ENCODE measurements at regions of chr2 and their contacts with region 1.

Region 1: GRCh38 chr2:119174216-119175037 is 15.9 kb upstream of the C1QL2 start:
- DNase-seq: peak in 2 of 10 donors; percentile 52 to 54
- H3K4me3 ChIP-seq: no peak overlapping the region
- H3K27ac ChIP-seq: no peak overlapping the region
- H3K27me3 ChIP-seq: peaks cover 0 to 4% (median 0%) of the 10 kb centered on the region in 45 donors
- CTCF ChIP-seq: peak in 55 of 56 donors; percentile 42 to 79 (median 65)

Region 2: DNA sequence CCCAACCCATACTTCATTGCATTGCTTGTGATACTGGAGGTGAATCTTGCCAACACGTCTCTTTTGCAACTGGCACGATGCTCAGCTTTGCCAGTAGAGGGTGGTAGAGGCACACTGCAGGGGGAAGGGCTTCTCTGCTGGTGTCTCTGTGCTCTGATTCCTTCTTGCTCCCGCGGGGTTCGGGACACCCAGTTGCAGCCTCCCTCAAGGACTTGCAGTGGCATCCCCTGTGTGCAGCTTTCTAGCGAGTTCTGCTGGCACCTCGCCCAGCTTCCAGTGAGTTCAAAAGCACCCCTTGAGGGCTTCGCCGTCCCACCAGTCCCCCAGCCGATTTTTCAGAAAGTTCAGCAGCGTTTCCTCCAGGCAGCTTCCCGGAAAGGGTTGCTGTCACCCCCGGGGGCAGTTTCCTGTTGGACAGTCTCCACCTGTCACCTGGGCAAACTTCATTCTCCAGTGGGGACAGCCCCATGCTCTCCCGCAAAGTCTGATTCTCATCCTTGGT is 291.7 kb before region 1 on chr2:
- intact Hi-C with region 1: loop called in 1 of 2 experiments (anchors 10 kb)
- DNase-seq: peak in 8 of 10 donors; percentile 15 to 74 (median 58)
- H3K4me3 ChIP-seq: peak overlapping the region in 27 of 59 donors; percentile 4 to 48 (median 28)
- H3K27ac ChIP-seq: no peak overlapping the region
- H3K27me3 ChIP-seq: peaks cover 0 to 42% (median 25%) of the 10 kb centered on the region in 45 donors
- CTCF ChIP-seq: peak; percentile 40 to 90 (median 81)

Measured in dorsolateral prefrontal cortex (tissue), 120 donors.